ENCODE measurements at regions of chr7 and their contacts with region 1.

Region 1: GRCh38 chr7:112495810-112496462 is 15.1 kb downstream of the LSMEM1 start:
- DNase-seq: peak; percentile 51
- H3K4me3 Mint-ChIP-seq: no peak overlapping the region
- H3K27ac Mint-ChIP-seq: no peak overlapping the region
- H3K4me1 Mint-ChIP-seq: no peaks in the 10 kb centered on the region
- H3K27me3 Mint-ChIP-seq: peaks cover 1% of the 10 kb centered on the region

Region 2: DNA sequence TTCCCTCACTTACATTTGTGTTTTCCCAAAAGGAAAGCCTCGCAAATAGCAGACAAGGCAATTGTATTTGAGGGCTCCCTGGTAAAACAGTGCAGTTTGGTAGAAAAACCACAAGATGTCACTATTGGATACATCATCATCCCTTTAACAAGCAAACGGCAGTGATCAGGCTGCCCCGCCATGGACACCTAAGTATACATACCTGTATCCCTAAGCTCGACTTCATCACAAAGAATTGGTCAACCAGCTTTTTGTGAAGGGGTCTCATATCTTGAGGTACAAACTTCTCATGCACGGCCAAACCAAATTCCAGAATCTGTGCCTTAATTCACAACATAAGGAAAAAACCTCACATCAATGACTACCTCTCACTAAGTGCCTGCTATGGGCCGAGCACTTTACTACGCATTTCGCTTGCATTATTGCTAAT is 754.1 kb before region 1 on chr7:
- CTCF ChIA-PET with region 1: interaction called, 12 read pairs
- POLR2A ChIA-PET with region 1: no interaction called
- intact Hi-C with region 1: loop called (anchors 1 kb)
- DNase-seq: peak; percentile 32
- H3K4me3 Mint-ChIP-seq: no peak overlapping the region
- H3K27ac Mint-ChIP-seq: no peak overlapping the region
- H3K4me1 Mint-ChIP-seq: no peaks in the 10 kb centered on the region
- H3K27me3 Mint-ChIP-seq: peaks cover 3% of the 10 kb centered on the region

Region 3: DNA sequence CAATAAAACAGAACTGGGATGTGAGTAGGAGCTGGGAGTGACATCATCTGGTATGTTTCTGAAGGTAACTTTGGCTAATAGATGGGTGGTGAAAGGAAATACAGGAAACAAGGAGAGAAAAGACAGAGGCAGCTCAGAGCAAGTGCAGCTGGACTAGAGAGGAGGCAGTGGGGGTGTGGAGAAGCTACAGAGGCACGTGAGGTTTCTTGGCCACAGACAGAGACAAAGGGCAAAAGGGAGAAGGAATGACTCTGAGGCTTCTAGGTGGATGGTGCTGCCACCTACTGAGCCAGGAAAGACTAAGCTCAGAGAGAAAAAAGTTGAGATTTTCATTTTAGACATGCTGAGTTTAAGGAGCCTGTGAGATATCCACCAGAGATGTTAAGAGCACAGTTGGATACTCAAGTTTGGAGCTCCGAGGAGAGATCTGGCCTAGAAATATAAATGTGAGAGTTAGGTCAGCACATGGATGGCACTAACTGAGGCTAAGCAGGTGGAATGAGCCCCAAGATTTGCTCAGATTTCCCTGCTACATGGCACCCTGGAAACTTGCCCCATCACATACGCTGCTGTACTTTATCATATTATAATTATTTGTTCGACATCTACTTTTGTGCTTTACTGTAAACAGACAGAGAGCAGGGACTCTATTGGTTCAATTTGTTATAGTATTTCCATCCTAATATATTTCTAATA is 640.6 kb before region 1 on chr7:
- CTCF ChIA-PET with region 1: no interaction called
- POLR2A ChIA-PET with region 1: no interaction called
- intact Hi-C with region 1: loop called (anchors 10 kb)
- DNase-seq: peak; percentile 12
- H3K4me3 Mint-ChIP-seq: no peak overlapping the region
- H3K27ac Mint-ChIP-seq: no peak overlapping the region
- H3K4me1 Mint-ChIP-seq: no peaks in the 10 kb centered on the region
- H3K27me3 Mint-ChIP-seq: no peaks in the 10 kb centered on the region

Region 4: GRCh38 chr7:112414855-112415490 is 81.0 kb before region 1 on chr7:
- CTCF ChIA-PET with region 1: no interaction called
- POLR2A ChIA-PET with region 1: no interaction called
- intact Hi-C with region 1: no loop called
- DNase-seq: no peak
- H3K4me3 Mint-ChIP-seq: no peak overlapping the region
- H3K27ac Mint-ChIP-seq: no peak overlapping the region
- H3K4me1 Mint-ChIP-seq: no peaks in the 10 kb centered on the region
- H3K27me3 Mint-ChIP-seq: peaks cover 12% of the 10 kb centered on the region